Astrocyte of the cerebellum (primary cell): ENCODE measurements at regions of chr12 and their contacts with region 1.

Region 1: DNA sequence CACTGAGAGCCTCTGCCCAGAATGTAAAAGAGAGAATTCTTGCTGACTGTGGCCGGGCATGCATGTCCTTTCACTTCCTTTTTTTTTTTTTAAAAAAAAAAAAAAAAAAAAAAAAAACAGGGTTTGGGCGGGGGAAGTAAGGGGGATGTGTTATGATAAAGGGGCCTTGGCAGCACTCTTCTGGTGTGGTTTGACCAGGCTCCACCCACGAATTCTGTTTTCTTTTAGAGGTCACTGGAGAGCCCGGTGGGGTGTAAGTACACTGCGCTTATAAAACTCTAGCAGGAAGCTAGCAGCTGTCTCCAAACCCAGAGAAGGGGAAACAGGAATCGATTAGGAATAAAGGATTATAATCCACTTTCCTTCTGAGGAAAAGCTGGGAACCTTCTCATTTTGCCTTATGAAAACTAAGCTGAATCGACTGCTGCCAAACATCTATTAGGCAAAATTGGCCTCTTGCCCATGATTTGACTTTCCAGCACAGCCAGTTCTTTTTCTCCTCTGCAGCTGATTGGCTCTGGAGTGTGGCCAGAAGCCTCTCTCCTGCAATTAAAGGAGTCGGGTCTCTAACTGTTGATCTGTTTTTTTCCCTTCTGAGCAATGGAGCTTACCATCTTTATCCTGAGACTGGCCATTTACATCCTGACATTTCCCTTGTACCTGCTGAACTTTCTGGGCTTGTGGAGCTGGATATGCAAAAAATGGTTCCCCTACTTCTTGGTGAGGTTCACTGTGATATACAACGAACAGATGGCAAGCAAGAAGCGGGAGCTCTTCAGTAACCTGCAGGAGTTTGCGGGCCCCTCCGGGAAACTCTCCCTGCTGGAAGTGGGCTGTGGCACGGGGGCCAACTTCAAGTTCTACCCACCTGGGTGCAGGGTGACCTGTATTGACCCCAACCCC is 27.7 kb upstream of the HIGD1C start:
- DNase-seq: peak; percentile 94
- H3K4me3 ChIP-seq: peak overlapping the region; percentile 62
- CTCF ChIP-seq: no peak

Region 2: DNA sequence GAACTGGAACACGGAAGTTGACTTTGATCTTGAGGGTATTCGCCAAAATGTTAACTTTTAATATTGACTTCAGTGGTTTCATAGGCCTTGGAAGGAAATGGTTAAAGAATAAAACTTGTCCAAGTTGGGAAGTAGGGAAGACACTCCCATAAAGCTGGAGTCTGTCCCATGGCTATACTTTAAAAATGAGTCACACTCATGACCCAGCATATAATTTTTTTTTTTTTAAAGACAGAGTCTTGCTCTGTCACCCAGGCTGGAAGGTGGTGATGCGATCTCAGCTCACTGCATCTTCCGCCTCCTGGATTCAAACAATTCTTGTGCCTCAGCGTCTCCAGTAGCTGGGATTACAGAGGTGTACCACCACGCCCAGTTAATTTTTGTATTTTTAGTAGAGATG is 62.4 kb before region 1 on chr12:
- in situ Hi-C with region 1: loop called (anchors 5 kb)
- DNase-seq: no peak
- H3K4me3 ChIP-seq: no peak overlapping the region
- CTCF ChIP-seq: no peak

Region 3: GRCh38 chr12:50894241-50894640 is 30.4 kb before region 1 on chr12:
- in situ Hi-C with region 1: no loop called
- DNase-seq: no peak
- H3K4me3 ChIP-seq: no peak overlapping the region
- CTCF ChIP-seq: no peak

Region 4: GRCh38 chr12:50986966-50987737 is 62.5 kb after region 1 on chr12:
- in situ Hi-C with region 1: no loop called
- DNase-seq: peak; percentile 38
- H3K4me3 ChIP-seq: no peak overlapping the region
- CTCF ChIP-seq: peak; percentile 81

Region 5: GRCh38 chr12:51020448-51021182 is 95.9 kb after region 1 on chr12:
- in situ Hi-C with region 1: loop called (anchors 5 kb)
- DNase-seq: no peak
- H3K4me3 ChIP-seq: no peak overlapping the region
- CTCF ChIP-seq: no peak